ENCODE measurements at regions of chr12 and their contacts with region 1.

Region 1: DNA sequence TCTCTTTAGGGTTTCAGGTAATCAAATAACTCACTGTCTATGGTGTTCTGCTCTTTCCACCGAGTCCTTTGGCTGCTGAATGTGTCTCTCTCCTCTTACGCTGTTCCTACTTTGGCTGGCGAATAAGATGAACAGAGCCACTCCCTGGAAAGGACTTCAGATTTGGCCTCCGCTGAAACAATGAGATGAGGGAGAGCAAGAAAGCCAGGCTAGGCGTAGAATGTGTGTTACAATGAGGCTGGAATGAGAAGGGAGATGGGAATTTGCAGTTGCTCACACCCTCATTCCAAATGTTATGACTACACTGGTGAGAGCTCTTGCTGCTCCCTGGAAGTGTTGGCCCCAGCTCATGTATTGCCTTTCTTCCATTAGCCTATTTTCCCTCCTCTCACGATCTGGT is at the start of gene MFAP5:
- DNase-seq: no peak
- H3K4me3 ChIP-seq: no peak within 1 kb of the TSS
- H3K27ac ChIP-seq: no peak within 1 kb of the TSS
- H3K4me1 ChIP-seq: peaks cover 7% of the 10 kb centered on the region
- CTCF ChIP-seq: no peak
- total RNA-seq, gene MFAP5: not detected in 2 replicates

Region 2: GRCh38 chr12:8629486-8630033 is 33.0 kb before region 1 on chr12:
- CTCF ChIA-PET with region 1: no interaction called
- POLR2A ChIA-PET with region 1: interaction called, 10 read pairs
- intact Hi-C with region 1: no loop called
- DNase-seq: peak; percentile 47
- H3K4me3 ChIP-seq: peak overlapping the region; percentile 0
- H3K27ac ChIP-seq: peak overlapping the region; percentile 40
- H3K4me1 ChIP-seq: peaks cover 17% of the 10 kb centered on the region
- CTCF ChIP-seq: no peak

Region 3: DNA sequence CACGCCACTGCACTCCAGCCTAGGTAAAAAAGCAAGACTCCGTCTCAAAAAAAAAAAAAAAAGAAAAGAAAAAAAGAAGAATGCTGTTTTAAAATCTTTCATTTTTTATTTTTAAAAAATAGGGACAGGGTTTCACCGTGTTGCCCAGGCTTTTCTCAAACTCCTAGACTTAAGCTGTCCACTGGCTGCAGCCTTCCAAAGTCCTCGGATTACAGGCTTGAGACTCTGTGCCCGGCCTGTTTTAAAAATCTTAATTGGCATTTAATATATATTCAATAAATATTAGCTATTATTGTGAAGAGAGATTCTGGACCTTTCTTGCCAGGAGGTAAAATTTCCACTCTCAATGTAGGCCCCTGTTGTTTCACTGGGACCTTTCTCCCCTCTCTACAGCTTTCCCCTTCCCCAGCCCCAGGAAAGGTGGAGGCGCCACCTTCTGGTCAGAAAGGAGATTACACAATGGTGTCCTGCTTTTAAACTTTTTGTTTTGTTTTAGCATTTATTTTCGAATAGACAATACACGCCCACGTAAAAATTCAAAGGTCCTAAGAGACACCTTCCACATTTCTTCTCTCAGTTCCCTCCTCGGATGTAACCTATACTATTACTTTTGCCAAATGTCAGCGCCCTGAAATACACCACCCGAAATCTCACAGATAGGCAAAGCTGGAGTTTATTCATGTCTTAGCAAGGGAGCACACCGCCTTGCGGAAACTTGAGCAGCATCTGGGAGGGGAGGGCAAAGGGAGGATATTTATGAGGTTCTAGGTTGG is 227.9 kb after region 1 on chr12:
- CTCF ChIA-PET with region 1: no interaction called
- POLR2A ChIA-PET with region 1: interaction called, 3 read pairs
- intact Hi-C with region 1: loop called (anchors 1 kb)
- DNase-seq: peak; percentile 64
- H3K4me3 ChIP-seq: peak overlapping the region; percentile 63
- H3K27ac ChIP-seq: no peak overlapping the region
- H3K4me1 ChIP-seq: no peaks in the 10 kb centered on the region
- CTCF ChIP-seq: peak; percentile 99

Region 4: DNA sequence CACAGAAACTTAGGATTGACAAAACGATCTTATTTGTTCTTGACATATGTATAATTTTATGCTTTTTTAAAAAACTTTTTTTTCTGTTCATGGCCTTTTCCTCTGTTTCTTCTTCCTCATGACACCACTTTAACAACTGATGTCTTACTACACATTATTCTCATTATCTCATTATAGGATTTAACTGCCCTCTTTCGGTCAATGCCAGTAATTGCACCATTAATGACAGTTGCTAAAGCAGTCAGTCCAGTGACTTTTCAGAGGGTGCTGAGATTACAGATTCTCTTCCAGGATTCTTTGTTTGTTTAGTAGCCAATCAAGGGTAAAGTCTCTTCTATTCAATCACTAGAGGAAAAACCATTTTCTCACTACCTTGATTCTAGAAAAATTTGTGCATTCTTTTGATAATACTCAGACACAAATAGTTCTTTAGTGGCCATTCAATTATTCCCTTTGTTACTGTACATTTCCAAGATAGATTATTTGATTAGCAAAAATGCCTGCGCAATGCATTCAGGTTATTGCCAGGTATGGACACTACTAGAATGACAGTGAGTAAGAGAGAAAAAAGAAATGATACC is 376.9 kb after region 1 on chr12:
- CTCF ChIA-PET with region 1: no interaction called
- POLR2A ChIA-PET with region 1: no interaction called
- intact Hi-C with region 1: loop called (anchors 5 kb)
- DNase-seq: peak; percentile 68
- H3K4me3 ChIP-seq: no peak overlapping the region
- H3K27ac ChIP-seq: no peak overlapping the region
- H3K4me1 ChIP-seq: no peaks in the 10 kb centered on the region
- CTCF ChIP-seq: peak; percentile 96

Measured in OCI-LY7 (cell line).